ENCODE measurements at regions of chr14 and their contacts with region 1.

Region 1: GRCh38 chr14:49633640-49634546 is 1.2 kb downstream of the DNAAF2 start:
- DNase-seq: peak; percentile 88 to 97 (median 94)
- ATAC-seq: peak; percentile 84
- H3K4me3 ChIP-seq: peak overlapping the region; percentile 74 to 92
- H3K4me3 Mint-ChIP-seq: peak overlapping the region; percentile 92
- H3K27ac ChIP-seq: peak overlapping the region; percentile 95
- H3K27ac Mint-ChIP-seq: peak overlapping the region; percentile 93
- H3K4me1 ChIP-seq: peaks cover 27% of the 10 kb centered on the region
- H3K4me1 Mint-ChIP-seq: peaks cover 62% of the 10 kb centered on the region
- H3K27me3 ChIP-seq: no peaks in the 10 kb centered on the region
- H3K27me3 Mint-ChIP-seq: no peaks in the 10 kb centered on the region
- CTCF ChIP-seq: peak; percentile 72

Region 2: DNA sequence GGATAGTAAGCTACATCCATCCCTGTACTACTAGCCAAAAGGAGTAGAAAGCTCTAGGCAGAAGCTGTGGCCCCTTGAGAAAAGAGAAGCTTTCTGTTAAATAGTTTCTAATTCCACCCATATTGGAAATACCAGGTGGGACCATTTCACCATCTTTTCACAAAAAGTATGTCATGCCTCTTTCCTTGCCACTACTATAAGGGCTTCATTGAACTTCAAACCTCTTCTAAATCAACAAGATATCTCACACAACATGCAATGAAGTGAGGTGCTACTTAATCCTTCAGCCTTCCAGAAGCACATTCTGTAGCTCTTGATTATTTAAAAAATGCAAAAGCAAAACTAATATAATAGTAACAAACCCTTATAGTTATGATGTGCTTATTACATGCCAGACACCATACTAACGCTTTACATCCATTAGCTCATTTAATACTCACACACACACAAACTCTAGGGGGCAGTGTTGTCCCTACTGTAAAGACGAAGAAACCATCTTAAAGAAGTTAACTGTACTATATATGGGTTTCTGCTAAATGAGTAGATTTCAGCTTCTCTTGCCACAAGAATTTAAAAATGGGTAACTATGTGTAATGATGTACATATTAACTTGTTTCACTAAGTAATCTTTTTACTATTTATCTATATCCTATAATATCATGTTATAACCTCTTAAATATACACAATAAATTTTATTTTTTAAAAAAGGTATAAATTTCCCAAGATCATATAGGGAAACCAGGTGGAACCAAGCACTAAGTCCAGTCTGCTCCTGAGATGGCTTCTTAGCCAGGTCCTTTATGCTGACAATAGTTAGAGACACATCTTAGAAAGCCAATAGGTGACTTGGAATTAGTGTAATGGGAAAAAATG is 172.1 kb before region 1 on chr14:
- CTCF ChIA-PET with region 1: interaction called, 4 read pairs
- POLR2A ChIA-PET with region 1: interaction called, 3 read pairs
- intact Hi-C with region 1: loop called in 1 of 2 experiments (anchors 5 kb)
- DNase-seq: peak in 8 of 9 experiments; percentile 39 to 85 (median 54)
- ATAC-seq: peak; percentile 87
- H3K4me3 ChIP-seq: no peak overlapping the region
- H3K4me3 Mint-ChIP-seq: no peak overlapping the region
- H3K27ac ChIP-seq: no peak overlapping the region
- H3K27ac Mint-ChIP-seq: no peak overlapping the region
- H3K4me1 ChIP-seq: no peaks in the 10 kb centered on the region
- H3K4me1 Mint-ChIP-seq: no peaks in the 10 kb centered on the region
- H3K27me3 ChIP-seq: no peaks in the 10 kb centered on the region
- H3K27me3 Mint-ChIP-seq: peaks cover 3% of the 10 kb centered on the region
- CTCF ChIP-seq: peak; percentile 78

Region 3: DNA sequence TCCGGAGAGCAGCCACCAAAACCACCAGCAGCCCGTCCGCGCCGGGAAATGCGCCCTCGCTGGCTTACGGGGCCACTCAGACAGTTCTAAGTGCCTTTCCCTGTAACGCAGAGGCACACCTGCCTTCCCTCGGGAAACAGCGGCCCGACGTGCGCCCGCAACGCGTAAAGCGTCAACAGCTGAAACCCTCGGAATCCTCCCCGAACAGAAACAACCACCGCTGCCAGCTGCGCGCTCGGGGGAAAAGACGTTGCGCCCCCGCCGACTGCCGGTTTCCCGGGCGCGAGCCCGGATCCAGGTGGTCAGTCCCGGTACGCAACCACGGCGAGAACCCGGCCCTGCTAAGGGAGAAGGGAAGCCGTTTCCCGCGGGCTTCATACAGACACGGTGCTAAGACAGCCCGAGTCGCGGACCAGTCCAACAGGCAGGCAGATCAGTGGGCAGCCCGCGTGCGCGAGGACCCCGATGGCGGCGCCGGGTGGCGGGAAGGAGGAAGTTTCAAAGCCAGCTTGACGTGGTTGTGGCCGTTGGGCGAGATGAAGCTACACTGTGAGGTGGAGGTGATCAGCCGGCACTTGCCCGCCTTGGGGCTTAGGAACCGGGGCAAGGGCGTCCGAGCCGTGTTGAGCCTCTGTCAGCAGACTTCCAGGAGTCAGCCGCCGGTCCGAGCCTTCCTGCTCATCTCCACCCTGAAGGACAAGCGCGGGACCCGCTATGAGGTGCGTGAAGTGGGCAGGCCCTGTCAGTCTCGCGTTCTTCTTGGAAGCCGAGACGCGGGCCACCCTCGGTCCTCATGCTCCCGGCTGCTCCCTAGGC is 35.2 kb before region 1 on chr14 and contains the start of gene LRR1:
- CTCF ChIA-PET with region 1: interaction called, 7 read pairs
- POLR2A ChIA-PET with region 1: interaction called, 10 read pairs
- intact Hi-C with region 1: loop called (anchors 1 to 2 kb)
- DNase-seq: peak; percentile 79 to 91 (median 84)
- ATAC-seq: peak; percentile 86
- H3K4me3 ChIP-seq: peak within 1 kb of the TSS; percentile 84 to 99
- H3K4me3 Mint-ChIP-seq: peak within 1 kb of the TSS; percentile 99
- H3K27ac ChIP-seq: peak within 1 kb of the TSS; percentile 92 to 95
- H3K27ac Mint-ChIP-seq: peak within 1 kb of the TSS; percentile 100
- H3K4me1 ChIP-seq: peaks cover 12% of the 10 kb centered on the region
- H3K4me1 Mint-ChIP-seq: peaks cover 31% of the 10 kb centered on the region
- H3K27me3 ChIP-seq: no peaks in the 10 kb centered on the region
- H3K27me3 Mint-ChIP-seq: no peaks in the 10 kb centered on the region
- CTCF ChIP-seq: no peak
- total RNA-seq, gene LRR1: 6.2 to 7.3 TPM

Region 4: GRCh38 chr14:49692811-49693734 is 59.2 kb after region 1 on chr14 and contains the start of gene KLHDC1:
- CTCF ChIA-PET with region 1: interaction called, 7 read pairs
- POLR2A ChIA-PET with region 1: interaction called, 8 read pairs
- intact Hi-C with region 1: loop called (anchors 1 to 2 kb)
- DNase-seq: peak; percentile 56 to 90 (median 81)
- ATAC-seq: peak; percentile 84
- H3K4me3 ChIP-seq: peak within 1 kb of the TSS; percentile 49 to 63
- H3K4me3 Mint-ChIP-seq: peak within 1 kb of the TSS; percentile 78
- H3K27ac ChIP-seq: peak within 1 kb of the TSS; percentile 59 to 82
- H3K27ac Mint-ChIP-seq: peak within 1 kb of the TSS; percentile 90
- H3K4me1 ChIP-seq: peaks cover 15% of the 10 kb centered on the region
- H3K4me1 Mint-ChIP-seq: peaks cover 34% of the 10 kb centered on the region
- H3K27me3 ChIP-seq: no peaks in the 10 kb centered on the region
- H3K27me3 Mint-ChIP-seq: no peaks in the 10 kb centered on the region
- CTCF ChIP-seq: no peak
- total RNA-seq, gene KLHDC1: 8.5 to 11.0 TPM

Region 5: GRCh38 chr14:49828640-49829039 is 194.7 kb after region 1 on chr14:
- CTCF ChIA-PET with region 1: interaction called, 23 read pairs
- POLR2A ChIA-PET with region 1: interaction called, 5 read pairs
- intact Hi-C with region 1: loop called (anchors 1 kb)
- DNase-seq: no peak
- ATAC-seq: no peak
- H3K4me3 ChIP-seq: no peak overlapping the region
- H3K4me3 Mint-ChIP-seq: no peak overlapping the region
- H3K27ac ChIP-seq: no peak overlapping the region
- H3K27ac Mint-ChIP-seq: no peak overlapping the region
- H3K4me1 ChIP-seq: no peaks in the 10 kb centered on the region
- H3K4me1 Mint-ChIP-seq: peaks cover 5% of the 10 kb centered on the region
- H3K27me3 ChIP-seq: no peaks in the 10 kb centered on the region
- H3K27me3 Mint-ChIP-seq: no peaks in the 10 kb centered on the region
- CTCF ChIP-seq: no peak

Region 6: DNA sequence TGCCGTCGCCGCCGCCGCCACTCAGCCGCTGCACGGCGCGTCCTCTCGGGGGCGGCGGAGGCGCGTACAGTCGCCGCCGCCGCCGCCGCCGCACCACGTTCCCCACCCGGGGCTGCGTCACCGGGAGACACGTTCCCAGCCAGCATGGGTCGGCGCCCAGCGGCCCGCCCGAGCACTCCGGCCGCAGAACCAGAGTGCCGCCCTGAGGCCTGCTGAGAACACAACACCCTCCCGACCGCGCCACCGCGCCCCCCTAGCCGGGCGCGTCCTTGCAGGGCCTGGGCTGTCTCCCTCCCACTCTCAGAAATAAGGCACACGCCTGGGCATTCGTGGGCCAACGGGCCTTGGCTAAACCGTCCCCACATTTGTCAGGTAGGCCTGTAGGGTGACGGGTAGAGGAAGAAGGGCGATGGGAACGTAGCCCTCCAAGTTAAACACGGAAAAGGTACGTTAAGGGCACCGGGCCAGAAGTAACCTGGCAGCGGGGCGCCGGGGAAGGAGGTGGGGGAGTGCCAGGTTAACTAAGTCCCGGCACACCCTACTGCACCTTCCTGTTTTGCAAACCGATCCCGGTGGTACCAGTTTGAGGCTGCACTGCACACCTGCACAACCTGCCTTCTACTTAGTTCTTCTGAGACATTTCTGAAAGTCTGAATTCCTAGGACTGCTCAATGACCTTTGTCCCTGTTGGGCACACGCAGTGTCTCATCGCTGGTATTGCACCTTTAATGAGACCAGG is 898.8 kb after region 1 on chr14 and contains the start of gene MAP4K5:
- CTCF ChIA-PET with region 1: no interaction called
- POLR2A ChIA-PET with region 1: no interaction called
- intact Hi-C with region 1: loop called (anchors 1 to 10 kb)
- DNase-seq: peak; percentile 73 to 95 (median 88)
- ATAC-seq: peak; percentile 93
- H3K4me3 ChIP-seq: peak within 1 kb of the TSS; percentile 45 to 88
- H3K4me3 Mint-ChIP-seq: peak within 1 kb of the TSS; percentile 89
- H3K27ac ChIP-seq: peak within 1 kb of the TSS; percentile 47 to 70
- H3K27ac Mint-ChIP-seq: peak within 1 kb of the TSS; percentile 92
- H3K4me1 ChIP-seq: peaks cover 42% of the 10 kb centered on the region
- H3K4me1 Mint-ChIP-seq: peaks cover 49% of the 10 kb centered on the region
- H3K27me3 ChIP-seq: no peaks in the 10 kb centered on the region
- H3K27me3 Mint-ChIP-seq: no peaks in the 10 kb centered on the region
- CTCF ChIP-seq: peak; percentile 69
- total RNA-seq, gene MAP4K5: 32.0 to 32.7 TPM

Measured in CD8-positive, alpha-beta T cell (primary cell).